PC-9 (cell line): ENCODE measurements at regions of chr7 and their contacts with region 1.

Region 1: DNA sequence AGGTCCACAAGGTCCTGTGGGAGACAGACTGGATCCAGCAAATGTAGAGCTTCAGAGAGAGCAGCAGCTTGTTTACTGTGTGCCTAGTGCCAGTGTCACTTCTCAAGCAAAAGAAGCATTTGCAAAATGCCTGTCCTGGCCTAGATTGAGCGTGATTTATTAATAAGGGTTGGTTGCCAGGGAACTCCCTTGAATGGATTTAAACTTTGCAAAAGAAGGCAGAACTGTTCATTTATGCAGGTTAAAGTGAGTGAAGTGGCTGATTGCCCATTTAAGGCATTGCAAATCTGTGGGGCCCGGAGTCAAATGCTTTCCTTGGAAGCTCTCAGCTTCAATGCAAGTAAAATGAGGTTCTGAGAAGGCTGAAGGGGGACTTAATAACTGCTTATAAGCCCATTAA is 71.3 kb downstream of the CDHR3 start:
- DNase-seq: no peak
- H3K4me3 ChIP-seq: no peak overlapping the region
- H3K27ac ChIP-seq: no peak overlapping the region
- H3K4me1 ChIP-seq: no peaks in the 10 kb centered on the region; the same call in 1 of the 2 replicates
- H3K27me3 ChIP-seq: no peaks in the 10 kb centered on the region
- CTCF ChIP-seq: no peak

Region 2: DNA sequence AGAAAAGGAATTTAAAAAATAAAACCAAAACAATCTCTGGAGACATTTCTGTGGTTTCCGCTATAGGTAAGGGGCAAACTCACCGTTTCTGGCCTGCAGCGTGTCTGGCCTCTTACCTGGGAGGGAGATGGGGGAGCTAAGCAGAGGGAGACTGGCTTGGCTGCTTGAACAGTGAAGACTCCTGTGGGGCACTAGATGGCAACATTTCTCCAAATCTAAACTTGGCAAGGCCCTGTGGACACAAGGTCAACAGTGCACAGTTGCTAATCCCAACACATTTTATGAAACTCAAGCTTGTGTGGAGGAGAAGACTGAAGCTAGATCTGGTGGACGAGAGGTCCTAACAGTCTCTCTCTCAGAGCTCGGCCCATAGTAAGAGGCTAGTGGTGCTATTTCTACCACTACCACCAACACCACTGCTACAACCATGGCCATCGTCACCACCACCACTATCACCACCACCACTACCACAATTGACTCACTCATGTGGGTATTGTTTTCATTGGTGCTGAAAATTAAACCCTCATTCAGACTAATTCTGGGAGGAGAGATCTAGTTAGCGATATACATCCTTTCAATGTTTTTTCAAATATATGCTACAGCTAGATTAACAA is 99.7 kb before region 1 on chr7:
- CTCF ChIA-PET with region 1: no interaction called
- POLR2A ChIA-PET with region 1: interaction called, 17 read pairs
- intact Hi-C with region 1: no loop called
- DNase-seq: peak in 1 of 2 experiments; percentile 11
- H3K4me3 ChIP-seq: no peak overlapping the region
- H3K27ac ChIP-seq: no peak overlapping the region
- H3K4me1 ChIP-seq: no peaks in the 10 kb centered on the region
- H3K27me3 ChIP-seq: no peaks in the 10 kb centered on the region
- CTCF ChIP-seq: peak; percentile 53